GM10248 (cell line): ENCODE measurements at regions of chr2 and their contacts with region 1.

Region 1: DNA sequence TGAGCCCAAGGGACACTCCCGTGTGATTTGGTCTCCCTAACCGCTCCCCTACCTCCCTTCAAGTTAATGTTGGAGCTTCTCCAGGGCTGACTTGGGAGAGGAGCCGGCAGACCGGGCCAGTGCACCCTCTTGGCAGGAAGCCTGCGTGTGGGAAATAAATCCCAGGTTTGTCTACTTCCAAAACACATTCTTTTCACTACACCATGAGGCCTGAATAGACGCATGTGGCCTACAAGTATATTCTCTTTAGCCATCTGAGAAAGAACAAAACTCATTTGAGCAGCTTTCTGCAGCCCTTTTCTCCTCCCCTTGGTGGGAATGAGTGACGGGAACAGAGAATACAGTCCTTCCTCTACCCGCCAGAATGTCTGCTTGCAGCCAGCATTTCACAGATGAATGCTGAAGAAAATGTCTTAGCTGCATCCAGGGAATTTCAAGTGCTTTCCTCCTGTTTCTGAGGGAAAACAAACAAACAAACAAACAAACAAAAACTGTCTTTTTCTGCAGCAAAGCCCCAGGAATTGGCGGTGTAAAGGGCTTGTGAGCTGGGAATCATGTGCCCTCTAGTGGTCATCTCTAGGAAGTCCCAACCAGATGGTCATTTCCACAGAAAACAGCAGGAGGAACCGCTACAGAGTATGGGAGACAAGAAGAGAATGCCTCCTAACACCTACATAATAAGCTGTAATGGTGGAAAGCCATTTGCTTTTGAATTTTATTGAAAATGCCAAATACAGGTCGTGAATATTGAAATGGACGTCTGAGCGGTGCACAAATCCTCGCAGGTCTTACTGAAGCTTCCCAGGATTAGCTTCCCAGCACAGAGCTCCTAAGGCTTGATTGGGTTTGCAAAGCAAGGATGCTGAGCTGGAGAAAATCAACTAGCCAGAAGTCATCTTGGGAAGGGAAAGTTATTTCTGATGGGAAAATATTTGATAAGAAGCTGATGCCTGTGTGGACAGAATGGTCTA is 41.2 kb upstream of the DAPL1 start:
- DNase-seq: peak; percentile 70
- CTCF ChIP-seq: peak; percentile 81

Region 2: DNA sequence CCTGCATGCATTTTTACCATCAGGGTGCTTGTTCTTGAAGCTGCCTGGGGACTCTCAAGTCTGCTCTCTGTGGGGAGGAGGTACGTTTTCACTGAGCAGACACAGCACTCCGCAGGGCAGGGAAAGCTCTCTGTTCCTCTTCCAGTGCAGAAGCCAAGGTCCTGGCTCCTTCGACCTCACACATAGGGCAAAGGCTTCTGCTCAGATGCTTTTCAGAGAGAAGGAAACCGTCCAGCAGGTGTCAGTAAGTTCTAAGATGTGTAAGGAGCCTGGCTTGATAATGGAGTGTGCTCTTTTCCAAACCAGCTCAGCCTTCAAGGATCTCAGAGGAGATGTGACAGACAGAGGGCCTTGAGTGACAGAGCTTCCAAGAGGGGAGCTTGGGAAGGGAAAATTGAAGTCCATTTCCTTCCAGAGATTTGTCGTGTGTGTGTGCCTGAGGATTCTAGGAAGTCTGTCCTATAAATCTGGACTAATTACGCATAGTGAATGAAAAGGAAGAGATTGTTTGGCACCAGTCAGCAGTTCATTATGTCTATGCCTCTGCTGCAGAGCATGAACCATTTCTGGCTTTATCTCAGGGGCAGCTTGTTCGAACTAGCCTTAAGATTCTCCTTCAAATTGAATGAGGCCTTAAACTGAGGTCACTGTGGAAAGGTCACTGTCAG is 719.6 kb before region 1 on chr2:
- CTCF ChIA-PET with region 1: interaction called, 94 read pairs
- POLR2A ChIA-PET with region 1: no interaction called
- DNase-seq: peak; percentile 35
- CTCF ChIP-seq: peak; percentile 55

Region 3: GRCh38 chr2:158179660-158180059 is 574.3 kb before region 1 on chr2:
- CTCF ChIA-PET with region 1: interaction called, 33 read pairs
- POLR2A ChIA-PET with region 1: no interaction called
- DNase-seq: no peak
- CTCF ChIP-seq: peak; percentile 40

Region 4: DNA sequence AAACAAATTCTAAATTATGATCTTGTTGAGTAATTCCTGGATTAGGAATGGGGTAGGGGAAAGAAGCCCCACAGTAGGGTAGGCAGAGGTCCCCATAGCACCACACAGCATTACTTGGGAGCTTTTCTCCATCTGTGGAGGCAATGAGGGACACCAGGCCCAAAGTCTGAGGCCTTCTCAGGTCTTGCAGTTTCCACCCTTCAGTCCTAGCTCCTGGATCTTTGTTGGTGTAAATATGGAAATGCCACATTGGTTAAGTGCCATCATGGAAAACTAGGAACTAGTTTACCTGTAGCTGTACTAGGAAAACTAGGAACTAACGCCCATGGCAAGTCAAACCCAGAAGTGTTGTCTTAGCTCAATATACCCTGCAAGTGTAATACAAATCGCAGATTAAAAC is 72.1 kb before region 1 on chr2:
- CTCF ChIA-PET with region 1: no interaction called
- POLR2A ChIA-PET with region 1: no interaction called
- DNase-seq: no peak
- CTCF ChIP-seq: no peak

Region 5: GRCh38 chr2:158723917-158724690 is 29.8 kb before region 1 on chr2:
- CTCF ChIA-PET with region 1: interaction called, 13 read pairs
- POLR2A ChIA-PET with region 1: no interaction called
- DNase-seq: no peak
- CTCF ChIP-seq: no peak

Region 6: DNA sequence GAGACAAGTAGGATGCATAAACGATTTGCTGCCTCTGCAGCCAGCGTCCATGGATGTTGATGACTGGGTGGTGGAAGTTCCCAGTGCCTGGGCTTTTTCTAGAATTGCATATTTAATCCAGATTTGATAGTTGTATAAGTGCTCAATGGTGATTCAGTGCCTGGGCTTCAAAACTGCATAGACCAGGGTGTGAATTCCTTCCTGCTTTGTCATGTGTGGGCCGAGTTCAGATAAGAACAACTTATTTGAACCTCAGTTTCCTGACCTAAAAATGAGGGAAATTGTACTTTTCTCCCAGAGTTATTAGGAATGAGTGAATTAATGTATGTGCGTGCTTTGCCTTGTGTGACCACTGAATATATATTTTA is 378.0 kb after region 1 on chr2:
- CTCF ChIA-PET with region 1: no interaction called
- POLR2A ChIA-PET with region 1: no interaction called
- DNase-seq: no peak
- CTCF ChIP-seq: no peak